ENCODE measurements at regions of chr17 and their contacts with region 1.

Region 1: GRCh38 chr17:76153640-76154039 is 12.6 kb upstream of the FOXJ1 start:
- DNase-seq: no peak
- ATAC-seq: no peak
- H3K4me3 ChIP-seq: no peak overlapping the region
- H3K4me3 Mint-ChIP-seq: peak overlapping the region; percentile 30
- H3K27ac ChIP-seq: peak overlapping the region; percentile 24 to 72
- H3K27ac Mint-ChIP-seq: peak overlapping the region; percentile 99
- H3K4me1 ChIP-seq: peaks cover 35% of the 10 kb centered on the region
- H3K4me1 Mint-ChIP-seq: peaks cover 50% of the 10 kb centered on the region
- H3K27me3 ChIP-seq: no peaks in the 10 kb centered on the region
- H3K27me3 Mint-ChIP-seq: no peaks in the 10 kb centered on the region
- CTCF ChIP-seq: no peak

Region 2: DNA sequence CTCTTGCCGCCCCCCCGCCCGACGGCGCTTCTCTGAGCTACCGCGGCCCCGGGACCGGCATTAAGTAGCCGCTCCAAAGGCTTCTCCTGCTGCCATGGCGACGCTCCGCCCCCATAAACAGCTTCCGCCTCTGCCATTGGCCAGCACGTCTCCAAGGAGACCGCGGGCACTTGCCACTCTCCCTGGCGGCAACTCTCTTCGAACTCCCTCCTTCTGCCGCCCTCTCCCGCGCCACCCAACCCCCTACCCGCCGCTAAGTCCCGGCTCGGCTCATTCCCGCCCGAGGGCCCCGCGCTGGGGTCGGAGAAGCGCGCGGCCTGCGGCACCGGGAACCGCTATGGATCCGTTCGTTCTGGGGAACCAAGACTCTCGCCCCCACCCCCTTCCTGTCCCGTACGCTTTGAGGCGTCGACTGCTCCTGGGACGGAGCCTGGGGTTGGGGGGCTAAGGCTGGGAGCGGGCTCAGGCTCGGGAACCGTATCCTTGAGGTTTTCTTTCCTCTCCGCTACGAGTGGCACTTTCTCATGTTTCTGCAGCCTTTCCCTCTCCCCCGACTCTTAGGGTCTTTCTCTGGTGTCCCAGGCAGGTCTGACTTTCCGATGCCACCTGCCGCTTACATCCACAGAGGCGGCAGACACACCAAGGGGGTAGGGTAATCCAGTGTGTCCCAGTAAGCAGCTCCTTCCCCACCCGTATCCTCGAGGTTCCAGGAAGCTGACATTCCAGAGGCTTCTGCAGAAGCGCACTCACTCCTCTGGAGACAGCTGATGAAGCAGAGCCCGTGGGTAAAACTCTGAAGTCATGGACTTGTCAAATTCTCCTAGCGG is 12.2 kb before region 1 on chr17 and contains the start of gene FOXJ1:
- CTCF ChIA-PET with region 1: no interaction called
- POLR2A ChIA-PET with region 1: interaction called, 29 read pairs
- intact Hi-C with region 1: no loop called
- DNase-seq: peak; percentile 83 to 97 (median 92)
- ATAC-seq: peak; percentile 64
- H3K4me3 ChIP-seq: peak within 1 kb of the TSS; percentile 51
- H3K4me3 Mint-ChIP-seq: peak within 1 kb of the TSS; percentile 87
- H3K27ac ChIP-seq: no peak within 1 kb of the TSS
- H3K27ac Mint-ChIP-seq: peak within 1 kb of the TSS; percentile 97
- H3K4me1 ChIP-seq: peaks cover 68% of the 10 kb centered on the region
- H3K4me1 Mint-ChIP-seq: peaks cover 60% of the 10 kb centered on the region
- H3K27me3 ChIP-seq: peaks cover 8 to 11% of the 10 kb centered on the region in 2 experiments
- H3K27me3 Mint-ChIP-seq: peaks cover 10% of the 10 kb centered on the region
- CTCF ChIP-seq: no peak
- total RNA-seq, gene FOXJ1: 0.63 to 0.89 TPM

Measured in CD4-positive, alpha-beta T cell (primary cell).